ENCODE measurements at regions of chr19 and their contacts with region 1.

Region 1: GRCh38 chr19:7674010-7675005 is 2.6 kb upstream of the MCEMP1 start:
- DNase-seq: peak in 1 of 2 donors; percentile 55
- ATAC-seq: peak; percentile 37 to 66 (median 52)
- H3K4me3 ChIP-seq: no peak overlapping the region
- H3K4me3 Mint-ChIP-seq: no peak overlapping the region
- H3K27ac ChIP-seq: no peak overlapping the region
- H3K27ac Mint-ChIP-seq: no peak overlapping the region
- H3K4me1 ChIP-seq: peaks cover 35% of the 10 kb centered on the region
- H3K4me1 Mint-ChIP-seq: peaks cover 8 to 31% of the 10 kb centered on the region in 2 donors
- H3K27me3 ChIP-seq: peaks cover 3% of the 10 kb centered on the region
- H3K27me3 Mint-ChIP-seq: peaks cover 30% of the 10 kb centered on the region in 2 donors
- CTCF ChIP-seq: no peak

Region 2: DNA sequence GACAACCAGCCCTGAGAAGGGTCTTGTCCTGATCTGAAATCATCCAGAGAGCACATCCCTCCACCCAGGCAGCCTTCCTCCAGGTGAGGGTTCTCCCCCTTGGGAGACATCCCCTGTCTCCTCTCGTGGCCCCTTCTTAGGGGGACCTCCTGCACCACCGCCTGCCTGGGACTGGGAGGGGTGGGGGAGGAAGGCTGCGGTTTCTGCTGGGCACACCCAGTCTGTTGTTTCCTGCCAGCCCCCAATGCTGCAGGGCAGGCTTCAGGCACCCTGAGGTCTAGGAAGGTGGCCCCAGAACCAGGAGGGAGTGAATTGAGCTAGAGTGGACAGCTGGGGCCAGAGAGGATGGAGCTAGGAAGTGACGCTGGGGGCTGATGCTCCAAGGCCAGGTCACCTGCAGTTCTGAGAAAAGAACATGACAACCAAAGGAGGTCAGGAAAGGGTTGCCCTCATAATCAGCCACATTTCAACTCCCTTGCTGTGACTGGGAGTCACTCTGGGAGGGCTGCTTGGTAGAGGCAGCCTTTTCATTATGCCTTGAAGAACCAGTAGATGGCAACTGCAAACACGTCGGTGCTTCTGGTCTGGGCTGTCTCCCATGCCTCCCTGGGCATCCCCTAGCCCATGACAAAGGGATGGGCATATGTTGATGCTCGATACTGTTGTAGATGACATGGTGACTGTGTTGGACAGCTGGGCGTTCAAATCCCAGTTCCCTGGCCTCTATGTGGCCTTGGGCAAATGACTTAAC is 324.2 kb before region 1 on chr19:
- intact Hi-C with region 1: loop called (anchors 10 kb)
- DNase-seq: peak; percentile 27 to 75
- ATAC-seq: peak; percentile 58 to 63 (median 61)
- H3K4me3 ChIP-seq: peak overlapping the region; percentile 64
- H3K4me3 Mint-ChIP-seq: peak overlapping the region; percentile 98
- H3K27ac ChIP-seq: peak overlapping the region; percentile 78
- H3K27ac Mint-ChIP-seq: peak overlapping the region; percentile 95 to 96
- H3K4me1 ChIP-seq: peaks cover 78% of the 10 kb centered on the region
- H3K4me1 Mint-ChIP-seq: peaks cover 65 to 79% of the 10 kb centered on the region in 2 donors
- H3K27me3 ChIP-seq: no peaks in the 10 kb centered on the region
- H3K27me3 Mint-ChIP-seq: no peaks in the 10 kb centered on the region
- CTCF ChIP-seq: no peak

Measured in natural killer cell (primary cell).